ENCODE measurements at regions of chr3 and their contacts with region 1.

Region 1: GRCh38 chr3:193465992-193466608 is 87.5 kb upstream of the ATP13A5 start:
- DNase-seq: no peak
- ATAC-seq: no peak
- H3K4me3 ChIP-seq: no peak overlapping the region
- H3K4me3 Mint-ChIP-seq: no peak overlapping the region
- H3K27ac ChIP-seq: no peak overlapping the region
- H3K27ac Mint-ChIP-seq: no peak overlapping the region
- H3K4me1 ChIP-seq: no peaks in the 10 kb centered on the region
- H3K4me1 Mint-ChIP-seq: peaks cover 2% of the 10 kb centered on the region
- H3K27me3 ChIP-seq: no peaks in the 10 kb centered on the region
- H3K27me3 Mint-ChIP-seq: no peaks in the 10 kb centered on the region
- CTCF ChIP-seq: no peak

Region 2: DNA sequence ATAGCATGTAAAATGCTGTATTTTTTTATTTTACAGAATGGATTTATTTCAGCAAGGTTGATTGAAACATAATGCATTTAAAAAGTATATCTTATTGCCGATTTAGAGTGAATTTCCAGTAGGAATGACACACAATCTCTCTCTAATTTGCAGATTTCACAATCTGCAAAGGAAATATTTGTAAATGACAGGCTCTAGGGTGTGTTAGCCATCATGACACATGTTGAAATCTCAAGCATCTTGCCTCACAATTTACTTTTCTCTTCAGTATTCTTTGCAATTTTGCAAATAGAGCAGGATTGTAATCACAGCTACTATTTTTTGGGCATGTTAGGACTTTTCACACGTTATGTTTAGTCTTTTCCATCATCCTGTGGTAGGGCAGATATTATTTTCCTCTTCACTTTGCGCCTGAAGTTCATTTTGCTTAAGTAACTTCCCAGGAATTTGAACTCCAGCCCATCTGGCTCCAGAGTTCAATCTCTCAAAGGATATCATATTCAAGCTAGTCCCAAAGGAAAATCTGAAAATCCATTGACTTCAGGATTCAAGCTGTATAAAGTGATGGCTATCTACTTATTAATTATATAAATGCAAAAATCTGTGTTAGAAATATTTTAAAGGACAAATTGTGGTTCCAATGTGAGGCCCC is 33.1 kb after region 1 on chr3:
- CTCF ChIA-PET with region 1: no interaction called
- POLR2A ChIA-PET with region 1: no interaction called
- intact Hi-C with region 1: no loop called
- DNase-seq: no peak
- ATAC-seq: no peak
- H3K4me3 ChIP-seq: no peak overlapping the region
- H3K4me3 Mint-ChIP-seq: no peak overlapping the region
- H3K27ac ChIP-seq: no peak overlapping the region
- H3K27ac Mint-ChIP-seq: no peak overlapping the region
- H3K4me1 ChIP-seq: no peaks in the 10 kb centered on the region
- H3K4me1 Mint-ChIP-seq: no peaks in the 10 kb centered on the region
- H3K27me3 ChIP-seq: no peaks in the 10 kb centered on the region
- H3K27me3 Mint-ChIP-seq: no peaks in the 10 kb centered on the region
- CTCF ChIP-seq: no peak

Region 3: DNA sequence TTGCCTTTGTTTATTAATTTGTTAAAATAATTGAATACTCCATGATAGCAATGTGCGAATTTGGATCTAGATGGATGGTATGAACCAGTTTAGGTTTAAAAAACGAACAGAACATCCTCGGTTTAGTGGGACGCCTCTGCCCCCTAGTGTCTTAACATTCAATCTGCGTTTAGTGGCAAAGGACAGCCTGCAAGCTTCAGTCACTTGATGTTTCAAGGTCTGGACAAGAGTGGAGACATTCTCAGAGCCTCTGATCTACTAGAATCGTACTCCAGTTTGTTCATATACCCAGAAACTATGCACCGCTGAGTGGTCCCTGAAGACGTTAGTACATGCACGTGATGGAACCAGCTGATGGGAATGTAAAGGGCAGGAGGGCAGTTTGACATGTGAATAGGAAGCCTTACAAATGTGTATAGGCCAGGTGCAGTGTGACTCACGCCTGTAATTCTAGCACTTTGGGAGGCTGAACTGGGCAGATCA is 106.4 kb after region 1 on chr3:
- CTCF ChIA-PET with region 1: interaction called, 10 read pairs
- POLR2A ChIA-PET with region 1: no interaction called
- intact Hi-C with region 1: loop called (anchors 5 kb)
- DNase-seq: peak; percentile 53
- ATAC-seq: no peak
- H3K4me3 ChIP-seq: no peak overlapping the region
- H3K4me3 Mint-ChIP-seq: no peak overlapping the region
- H3K27ac ChIP-seq: no peak overlapping the region
- H3K27ac Mint-ChIP-seq: no peak overlapping the region
- H3K4me1 ChIP-seq: no peaks in the 10 kb centered on the region
- H3K4me1 Mint-ChIP-seq: peaks cover 2% of the 10 kb centered on the region
- H3K27me3 ChIP-seq: no peaks in the 10 kb centered on the region
- H3K27me3 Mint-ChIP-seq: no peaks in the 10 kb centered on the region
- CTCF ChIP-seq: peak; percentile 83

Measured in B cell (primary cell).